ENCODE measurements at regions of chr2 and their contacts with region 1.

Region 1: GRCh38 chr2:35858216-35858615 is 497.4 kb upstream of the CRIM1 start:
- DNase-seq: no peak
- ATAC-seq: no peak
- H3K4me3 ChIP-seq: no peak overlapping the region
- H3K27ac ChIP-seq: no peak overlapping the region
- H3K4me1 ChIP-seq: no peaks in the 10 kb centered on the region
- H3K27me3 ChIP-seq: peaks cover 0 to 9% (median 0%) of the 10 kb centered on the region in 7 donors
- CTCF ChIP-seq: no peak

Region 2: DNA sequence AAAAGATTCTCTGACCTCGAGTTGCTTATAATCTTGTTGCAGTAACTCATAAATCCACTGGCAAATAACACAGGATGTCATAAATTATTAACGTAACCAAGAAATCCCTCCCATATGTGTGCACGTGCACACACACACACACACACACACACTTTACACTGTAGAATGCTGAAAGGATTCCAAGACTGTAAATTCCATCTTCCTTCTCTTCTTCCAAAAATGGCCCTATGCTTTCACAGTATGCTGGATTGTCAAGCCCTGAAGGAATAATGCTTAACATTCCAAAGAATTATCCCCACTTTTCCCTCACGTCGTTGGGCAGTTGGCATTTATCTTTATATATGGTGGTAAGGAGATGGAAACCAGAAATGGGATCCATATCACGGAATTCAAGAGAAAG is 379.9 kb after region 1 on chr2:
- intact Hi-C with region 1: loop called in 1 of 10 experiments (anchors 5 kb)
- DNase-seq: no peak
- ATAC-seq: no peak
- H3K4me3 ChIP-seq: no peak overlapping the region
- H3K27ac ChIP-seq: no peak overlapping the region
- H3K4me1 ChIP-seq: no peaks in the 10 kb centered on the region
- H3K27me3 ChIP-seq: peaks cover 0 to 11% (median 0%) of the 10 kb centered on the region in 7 donors
- CTCF ChIP-seq: no peak

Measured in heart right ventricle (tissue), 16 donors.